PC-3 (cell line): ENCODE measurements at regions of chr1 and their contacts with region 1.

Region 1: DNA sequence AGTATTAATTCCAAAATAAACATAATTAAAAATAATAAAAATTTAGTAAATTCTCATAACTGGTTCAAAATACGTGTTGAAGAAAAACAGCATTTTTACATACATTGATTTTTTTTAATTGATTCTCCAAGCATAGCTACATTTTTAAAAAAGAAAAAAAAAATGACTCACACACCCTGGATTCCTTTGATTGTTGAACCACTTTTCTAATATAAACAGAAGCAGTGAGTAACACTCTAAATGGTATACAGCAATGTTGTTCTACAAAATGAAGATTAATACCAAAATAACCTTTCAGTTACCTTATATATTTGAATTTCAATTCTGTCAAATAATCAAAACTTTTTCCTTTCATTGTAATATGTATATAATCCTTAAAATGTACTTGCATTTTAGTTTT is 246.6 kb upstream of the NR5A2 start:
- DNase-seq: peak; percentile 85
- ATAC-seq: peak; percentile 53
- H3K4me3 ChIP-seq: no peak overlapping the region
- H3K27ac ChIP-seq: no peak overlapping the region
- H3K4me1 ChIP-seq: peaks cover 33% of the 10 kb centered on the region
- H3K27me3 ChIP-seq: no peaks in the 10 kb centered on the region
- CTCF ChIP-seq: no peak

Region 2: DNA sequence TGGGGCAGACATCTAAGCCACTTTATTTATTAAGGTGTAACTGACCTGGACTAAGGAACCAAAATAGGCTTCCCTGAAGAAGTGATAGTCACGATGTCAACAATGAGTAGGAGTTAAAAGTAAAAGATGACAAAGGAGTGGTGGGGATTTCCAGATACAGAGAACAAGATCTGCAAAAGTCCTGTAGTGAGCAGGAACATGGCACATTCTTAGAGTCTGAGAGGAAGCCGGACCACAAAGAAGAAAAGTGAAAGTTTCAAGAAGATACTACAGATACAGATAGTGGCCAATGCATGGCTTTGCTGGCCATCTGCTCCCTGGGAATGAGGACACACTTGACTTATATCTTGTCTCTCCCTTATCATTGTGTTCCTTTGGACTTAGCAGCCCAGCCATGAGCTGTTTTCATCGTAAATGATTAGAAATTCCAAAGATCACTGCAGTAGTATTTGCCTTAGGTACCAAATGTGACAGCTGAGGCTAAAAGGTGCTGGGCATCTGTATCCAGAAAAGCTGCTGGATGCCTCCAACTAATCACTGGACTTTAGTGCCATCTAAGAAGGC is 55.9 kb before region 1 on chr1:
- CTCF ChIA-PET with region 1: no interaction called
- POLR2A ChIA-PET with region 1: no interaction called
- intact Hi-C with region 1: no loop called
- DNase-seq: no peak
- ATAC-seq: no peak
- H3K4me3 ChIP-seq: no peak overlapping the region
- H3K27ac ChIP-seq: no peak overlapping the region
- H3K4me1 ChIP-seq: no peaks in the 10 kb centered on the region
- H3K27me3 ChIP-seq: no peaks in the 10 kb centered on the region
- CTCF ChIP-seq: no peak

Region 3: DNA sequence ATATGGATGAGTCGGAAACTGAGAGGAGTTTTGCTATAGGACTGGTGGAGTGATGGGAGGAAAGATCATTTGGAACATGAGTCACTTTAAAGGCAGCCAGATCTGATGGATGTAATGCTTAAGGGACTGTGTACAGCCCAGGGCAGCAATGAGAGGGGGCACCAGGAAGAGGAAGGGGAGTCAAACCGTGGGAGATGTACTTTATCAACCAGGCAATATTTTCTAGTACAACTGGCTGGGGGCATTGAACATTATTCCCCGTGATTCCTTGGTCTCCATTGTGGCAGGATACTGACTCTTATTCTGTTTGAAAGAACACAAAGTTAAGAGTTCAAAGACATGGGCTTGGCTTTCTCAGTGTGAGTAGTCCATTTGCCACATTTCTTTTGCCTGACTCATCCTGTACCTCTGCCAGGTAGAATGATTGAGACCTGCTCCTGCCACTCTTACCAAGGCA is 21.7 kb before region 1 on chr1:
- CTCF ChIA-PET with region 1: no interaction called
- POLR2A ChIA-PET with region 1: interaction called, 4 read pairs
- intact Hi-C with region 1: loop called (anchors 2 kb)
- DNase-seq: peak; percentile 100
- ATAC-seq: peak; percentile 98
- H3K4me3 ChIP-seq: peak overlapping the region; percentile 36
- H3K27ac ChIP-seq: peak overlapping the region; percentile 63
- H3K4me1 ChIP-seq: peaks cover 29% of the 10 kb centered on the region
- H3K27me3 ChIP-seq: no peaks in the 10 kb centered on the region
- CTCF ChIP-seq: no peak

Region 4: GRCh38 chr1:199859491-199859933 is 78.6 kb after region 1 on chr1:
- CTCF ChIA-PET with region 1: interaction called, 5 read pairs
- POLR2A ChIA-PET with region 1: interaction called, 11 read pairs
- intact Hi-C with region 1: no loop called
- DNase-seq: peak; percentile 98
- ATAC-seq: peak; percentile 97
- H3K4me3 ChIP-seq: no peak overlapping the region
- H3K27ac ChIP-seq: peak overlapping the region; percentile 3
- H3K4me1 ChIP-seq: peaks cover 24% of the 10 kb centered on the region
- H3K27me3 ChIP-seq: peaks cover 3% of the 10 kb centered on the region; the same call in 1 of the 2 replicates
- CTCF ChIP-seq: no peak

Region 5: GRCh38 chr1:199898654-199899053 is 117.7 kb after region 1 on chr1:
- CTCF ChIA-PET with region 1: no interaction called
- POLR2A ChIA-PET with region 1: no interaction called
- intact Hi-C with region 1: no loop called
- DNase-seq: peak; percentile 62
- ATAC-seq: peak; percentile 92
- H3K4me3 ChIP-seq: no peak overlapping the region
- H3K27ac ChIP-seq: no peak overlapping the region
- H3K4me1 ChIP-seq: no peaks in the 10 kb centered on the region
- H3K27me3 ChIP-seq: peaks cover 12% of the 10 kb centered on the region; the same call in 1 of the 2 replicates
- CTCF ChIP-seq: no peak

Region 6: DNA sequence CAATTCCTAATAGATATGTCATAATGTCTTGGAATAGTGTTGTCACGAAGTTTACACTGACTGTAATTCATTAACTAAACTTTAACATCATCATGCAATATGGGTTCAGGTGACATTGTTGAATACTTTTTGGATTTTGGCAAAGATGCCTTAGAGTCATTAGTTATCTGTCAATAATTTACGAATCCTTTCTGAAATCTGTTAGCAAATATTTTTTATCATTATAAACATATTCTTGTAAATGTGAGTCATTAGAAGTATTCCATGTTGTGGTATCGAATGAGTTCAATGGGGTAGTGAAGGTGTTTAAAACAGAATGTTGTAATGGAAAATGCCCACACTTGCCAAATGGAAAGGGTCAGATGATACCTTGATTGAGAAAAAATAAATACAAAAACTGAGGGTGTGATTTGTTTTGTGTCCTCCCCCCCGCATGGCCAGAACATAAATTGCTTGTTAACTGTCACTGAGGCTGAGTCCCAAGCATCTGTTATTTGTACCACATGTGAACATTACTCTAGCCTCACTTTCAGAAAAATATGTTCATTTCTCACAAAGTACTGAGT is 241.4 kb after region 1 on chr1:
- CTCF ChIA-PET with region 1: no interaction called
- POLR2A ChIA-PET with region 1: no interaction called
- intact Hi-C with region 1: loop called (anchors 5 kb)
- DNase-seq: no peak
- ATAC-seq: no peak
- H3K4me3 ChIP-seq: no peak overlapping the region
- H3K27ac ChIP-seq: no peak overlapping the region
- H3K4me1 ChIP-seq: no peaks in the 10 kb centered on the region
- H3K27me3 ChIP-seq: peaks cover 8% of the 10 kb centered on the region
- CTCF ChIP-seq: no peak

Region 7: GRCh38 chr1:200279810-200280411 is 499.0 kb after region 1 on chr1:
- CTCF ChIA-PET with region 1: no interaction called
- POLR2A ChIA-PET with region 1: no interaction called
- intact Hi-C with region 1: loop called (anchors 10 kb)
- DNase-seq: peak; percentile 99
- ATAC-seq: peak; percentile 88
- H3K4me3 ChIP-seq: no peak overlapping the region
- H3K27ac ChIP-seq: no peak overlapping the region
- H3K4me1 ChIP-seq: no peaks in the 10 kb centered on the region
- H3K27me3 ChIP-seq: no peaks in the 10 kb centered on the region
- CTCF ChIP-seq: peak; percentile 97

Region 8: GRCh38 chr1:200845360-200845759 is 1064.4 kb after region 1 on chr1:
- CTCF ChIA-PET with region 1: no interaction called
- POLR2A ChIA-PET with region 1: no interaction called
- intact Hi-C with region 1: loop called (anchors 10 kb)
- DNase-seq: no peak
- ATAC-seq: no peak
- H3K4me3 ChIP-seq: no peak overlapping the region
- H3K27ac ChIP-seq: no peak overlapping the region
- H3K4me1 ChIP-seq: peaks cover 4% of the 10 kb centered on the region
- H3K27me3 ChIP-seq: peaks cover 30% of the 10 kb centered on the region
- CTCF ChIP-seq: no peak